A549 (cell line): ENCODE measurements at regions of chr7 and their contacts with region 1.

Region 1: GRCh38 chr7:55255496-55256435 is 109.4 kb upstream of the LANCL2 start:
- DNase-seq: peak; percentile 71 to 85
- ATAC-seq: peak; percentile 89 to 91
- H3K4me3 ChIP-seq: peak overlapping the region; percentile 69
- H3K27ac ChIP-seq: peak overlapping the region; percentile 91 to 95
- H3K4me1 ChIP-seq: peaks cover 4% of the 10 kb centered on the region; the same call in 1 of the 3 replicates
- CTCF ChIP-seq: peak; percentile 82
- EP300 ChIP-seq: no peak
- POLR2A ChIP-seq: no peak
- RAD21 ChIP-seq: peak; percentile 91 to 94

Region 2: DNA sequence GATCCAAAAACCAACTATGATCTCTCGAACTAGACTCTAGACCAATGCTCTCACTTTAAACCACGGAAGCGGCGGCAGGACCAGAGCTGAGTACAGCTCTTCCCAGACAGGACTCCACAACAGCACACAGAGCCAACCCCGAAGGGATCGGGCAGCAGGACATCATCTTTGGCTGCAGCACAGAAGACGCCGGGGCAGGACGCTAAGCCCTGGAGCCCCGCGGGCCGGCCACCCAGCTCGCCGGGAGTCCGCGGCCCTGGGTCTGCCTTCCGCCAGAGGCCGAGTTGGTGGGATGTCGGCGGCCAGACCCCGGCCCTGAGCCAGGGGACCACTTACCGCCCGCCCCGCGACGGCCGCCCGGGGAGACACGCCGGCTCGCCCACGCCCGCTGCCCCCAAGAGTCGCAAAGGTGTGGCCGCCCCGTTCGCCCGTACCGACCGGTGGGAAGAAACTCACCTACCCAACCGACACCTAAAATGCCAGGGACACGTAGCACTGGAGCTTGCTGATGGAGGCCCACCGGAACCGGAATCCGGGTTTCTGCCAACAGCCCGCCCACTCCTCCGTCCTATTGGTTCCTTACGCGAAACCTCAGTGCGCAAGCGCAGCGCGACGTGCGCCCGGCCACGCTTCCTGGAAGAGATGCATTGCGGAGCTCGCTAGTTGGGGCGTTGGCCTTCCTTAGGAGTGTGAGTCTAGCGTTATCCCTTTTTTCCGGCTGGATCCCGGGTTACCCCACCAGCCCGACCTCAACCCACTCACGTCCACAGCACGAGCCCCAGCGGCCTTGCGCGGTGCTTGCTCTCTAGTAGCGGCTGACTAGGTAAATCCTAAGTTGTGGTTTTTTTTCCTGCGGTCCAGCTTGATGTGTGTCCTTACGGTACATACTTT is 496.8 kb before region 1 on chr7 and contains the start of gene SEC61G:
- CTCF ChIA-PET with region 1: interaction called, 742 read pairs
- POLR2A ChIA-PET with region 1: interaction called, 7 read pairs
- DNase-seq: peak; percentile 93 to 97
- ATAC-seq: peak; percentile 93 to 97
- H3K4me3 ChIP-seq: peak within 1 kb of the TSS; percentile 79
- H3K27ac ChIP-seq: peak within 1 kb of the TSS; percentile 93 to 100
- H3K4me1 ChIP-seq: peaks cover 13% of the 10 kb centered on the region; the same call in 2 of the 3 replicates
- CTCF ChIP-seq: no peak
- EP300 ChIP-seq: no peak
- POLR2A ChIP-seq: peak; percentile 84
- RAD21 ChIP-seq: no peak
- polyA plus RNA-seq, gene SEC61G: 290 and 356 TPM in 2 replicates

Region 3: GRCh38 chr7:54839538-54840213 is 416.1 kb before region 1 on chr7:
- CTCF ChIA-PET with region 1: interaction called, 78 read pairs
- POLR2A ChIA-PET with region 1: no interaction called
- DNase-seq: peak; percentile 80 to 81
- ATAC-seq: peak; percentile 99
- H3K4me3 ChIP-seq: no peak overlapping the region
- H3K27ac ChIP-seq: peak overlapping the region; percentile 65 to 71
- H3K4me1 ChIP-seq: peaks cover 52% of the 10 kb centered on the region
- CTCF ChIP-seq: peak; percentile 83
- EP300 ChIP-seq: no peak
- POLR2A ChIP-seq: no peak
- RAD21 ChIP-seq: peak; percentile 94 to 97

Region 4: DNA sequence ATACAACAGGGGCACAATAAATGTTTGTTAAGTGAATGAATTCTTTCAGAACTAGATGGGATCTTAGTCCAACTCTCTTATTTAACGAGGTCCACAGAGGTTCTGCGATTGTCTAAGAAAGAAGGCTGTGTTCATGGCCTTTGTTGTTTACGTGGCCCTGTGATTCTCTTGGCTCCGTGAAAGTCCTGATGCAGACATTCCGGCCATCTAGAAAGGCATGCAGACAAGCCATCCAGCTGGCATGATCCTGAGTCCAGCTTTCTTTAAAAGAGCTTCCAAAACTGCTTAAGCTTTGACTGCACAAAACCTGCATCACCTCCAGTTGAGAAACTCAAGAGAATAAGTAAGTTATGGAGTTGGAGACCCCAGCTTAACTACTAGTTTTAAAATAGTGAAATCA is 211.0 kb before region 1 on chr7:
- CTCF ChIA-PET with region 1: interaction called, 26 read pairs
- POLR2A ChIA-PET with region 1: no interaction called
- DNase-seq: no peak
- ATAC-seq: no peak
- H3K4me3 ChIP-seq: no peak overlapping the region
- H3K27ac ChIP-seq: peak overlapping the region in 1 of 2 experiments; percentile 50; a peak in 1 of 6 replicates
- H3K4me1 ChIP-seq: peaks cover 72% of the 10 kb centered on the region
- CTCF ChIP-seq: no peak
- EP300 ChIP-seq: no peak
- POLR2A ChIP-seq: no peak
- RAD21 ChIP-seq: no peak

Region 5: GRCh38 chr7:55144333-55145317 is 111.1 kb before region 1 on chr7:
- CTCF ChIA-PET with region 1: interaction called, 24 read pairs
- POLR2A ChIA-PET with region 1: no interaction called
- DNase-seq: peak in 1 of 2 experiments; percentile 31
- ATAC-seq: peak; percentile 70 to 86
- H3K4me3 ChIP-seq: no peak overlapping the region
- H3K27ac ChIP-seq: peak overlapping the region in 1 of 2 experiments; percentile 66; a peak in 3 of 6 replicates
- H3K4me1 ChIP-seq: peaks cover 21% of the 10 kb centered on the region; the same call in 2 of the 3 replicates
- CTCF ChIP-seq: peak; percentile 41; the same call in 2 of the 3 replicates
- EP300 ChIP-seq: no peak
- POLR2A ChIP-seq: no peak
- RAD21 ChIP-seq: peak in 1 of 2 experiments; percentile 16; a peak in 2 of 5 replicates

Region 6: DNA sequence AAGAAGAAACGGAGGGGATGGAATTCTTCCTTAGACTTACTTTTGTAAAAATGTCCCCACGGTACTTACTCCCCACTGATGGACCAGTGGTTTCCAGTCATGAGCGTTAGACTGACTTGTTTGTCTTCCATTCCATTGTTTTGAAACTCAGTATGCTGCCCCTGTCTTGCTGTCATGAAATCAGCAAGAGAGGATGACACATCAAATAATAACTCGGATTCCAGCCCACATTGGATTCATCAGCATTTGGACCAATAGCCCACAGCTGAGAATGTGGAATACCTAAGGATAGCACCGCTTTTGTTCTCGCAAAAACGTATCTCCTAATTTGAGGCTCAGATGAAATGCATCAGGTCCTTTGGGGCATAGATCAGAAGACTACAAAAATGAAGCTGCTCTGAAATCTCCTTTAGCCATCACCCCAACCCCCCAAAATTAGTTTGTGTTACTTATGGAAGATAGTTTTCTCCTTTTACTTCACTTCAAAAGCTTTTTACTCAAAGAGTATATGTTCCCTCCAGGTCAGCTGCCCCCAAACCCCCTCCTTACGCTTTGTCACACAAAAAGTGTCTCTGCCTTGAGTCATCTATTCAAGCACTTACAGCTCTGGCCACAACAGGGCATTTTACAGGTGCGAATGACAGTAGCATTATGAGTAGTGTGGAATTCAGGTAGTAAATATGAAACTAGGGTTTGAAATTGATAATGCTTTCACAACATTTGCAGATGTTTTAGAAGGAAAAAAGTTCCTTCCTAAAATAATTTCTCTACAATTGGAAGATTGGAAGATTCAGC is 49.3 kb before region 1 on chr7:
- CTCF ChIA-PET with region 1: interaction called, 63 read pairs
- POLR2A ChIA-PET with region 1: no interaction called
- DNase-seq: no peak
- ATAC-seq: no peak
- H3K4me3 ChIP-seq: no peak overlapping the region
- H3K27ac ChIP-seq: no peak overlapping the region
- H3K4me1 ChIP-seq: no peaks in the 10 kb centered on the region
- CTCF ChIP-seq: no peak
- EP300 ChIP-seq: no peak
- POLR2A ChIP-seq: no peak
- RAD21 ChIP-seq: no peak

Region 7: DNA sequence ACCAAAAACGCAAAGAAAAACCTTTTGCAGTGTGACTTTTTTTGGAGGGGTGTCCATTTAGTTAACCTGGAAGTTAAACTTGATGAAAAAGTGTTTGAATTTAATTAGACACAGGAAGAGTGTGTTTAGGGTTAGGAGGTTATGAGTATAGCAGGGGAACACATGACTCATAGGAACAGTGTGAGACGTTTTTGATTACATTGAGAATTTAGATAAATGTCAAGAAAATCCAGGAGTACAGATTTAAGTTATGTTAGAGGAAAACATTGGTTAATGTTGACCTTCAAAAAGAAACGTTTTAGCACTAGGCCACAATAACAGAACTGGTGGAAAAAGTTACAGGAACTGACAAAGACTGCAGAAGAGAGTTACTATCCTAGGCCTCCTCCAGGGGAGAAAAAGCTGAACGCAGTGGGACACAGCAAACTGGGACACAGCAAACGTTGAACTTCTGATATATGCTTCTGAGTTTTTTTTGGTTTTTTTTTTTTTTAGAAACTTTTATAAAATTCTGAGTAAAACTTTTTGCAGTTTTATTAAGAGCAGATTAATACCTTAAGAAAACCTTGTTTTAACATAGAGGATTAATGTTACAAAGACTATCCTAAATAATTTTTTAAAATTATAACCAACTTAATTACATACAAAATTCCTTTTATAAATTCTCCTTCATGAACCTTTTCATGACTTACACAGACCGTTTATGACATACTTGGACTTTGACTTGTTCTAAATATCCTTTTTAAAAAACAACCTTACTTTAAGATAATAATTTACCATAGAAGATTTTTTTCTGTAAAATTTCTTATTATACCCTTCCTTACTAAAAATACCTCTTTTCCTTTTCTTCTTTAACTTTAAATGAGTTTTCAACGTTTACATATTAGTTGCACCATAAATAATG is 131.5 kb after region 1 on chr7:
- CTCF ChIA-PET with region 1: no interaction called
- POLR2A ChIA-PET with region 1: no interaction called
- DNase-seq: peak in 1 of 2 experiments; percentile 44
- ATAC-seq: no peak
- H3K4me3 ChIP-seq: no peak overlapping the region
- H3K27ac ChIP-seq: no peak overlapping the region
- H3K4me1 ChIP-seq: no peaks in the 10 kb centered on the region
- CTCF ChIP-seq: no peak
- EP300 ChIP-seq: no peak
- POLR2A ChIP-seq: no peak
- RAD21 ChIP-seq: no peak

Region 8: GRCh38 chr7:55409482-55410225 is 153.9 kb after region 1 on chr7:
- CTCF ChIA-PET with region 1: interaction called, 18 read pairs
- POLR2A ChIA-PET with region 1: no interaction called
- DNase-seq: peak in 1 of 2 experiments; percentile 19
- ATAC-seq: peak; percentile 68; a peak in 4 of 6 replicates
- H3K4me3 ChIP-seq: no peak overlapping the region
- H3K27ac ChIP-seq: no peak overlapping the region
- H3K4me1 ChIP-seq: no peaks in the 10 kb centered on the region
- CTCF ChIP-seq: no peak
- EP300 ChIP-seq: no peak
- POLR2A ChIP-seq: no peak
- RAD21 ChIP-seq: no peak